Caco-2 (cell line): ENCODE measurements at regions of chr17 and their contacts with region 1.

Region 1: DNA sequence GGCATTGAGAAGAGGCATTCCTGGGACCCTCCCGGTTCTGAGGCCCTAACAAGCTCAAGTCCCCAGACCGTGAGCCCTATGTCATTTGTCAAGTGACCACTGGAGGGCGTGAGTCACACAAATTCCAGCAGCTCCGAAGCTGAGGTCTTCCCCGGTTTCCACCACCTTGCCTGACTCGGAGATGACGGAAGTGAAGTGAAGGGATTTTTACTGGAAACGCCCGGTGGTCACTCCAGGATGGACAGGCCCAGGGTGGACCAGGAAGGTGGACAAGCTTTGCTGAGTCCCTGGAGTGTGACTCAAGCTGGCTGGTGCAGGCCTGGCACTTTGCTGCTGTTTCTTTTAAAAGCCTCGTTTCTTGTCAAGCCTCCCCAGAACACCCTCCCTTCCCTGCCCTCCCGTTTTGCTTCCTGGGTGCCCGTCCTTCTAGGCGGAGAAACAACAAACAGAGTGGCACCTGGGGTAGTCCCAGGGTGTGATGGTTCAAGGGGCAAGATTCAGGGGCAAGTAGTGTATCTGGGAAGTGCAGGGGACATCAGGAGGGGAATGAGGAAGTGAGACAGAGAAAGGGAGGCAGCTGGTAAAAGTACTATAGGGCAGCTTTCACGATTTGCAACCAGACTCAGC is 5.3 kb upstream of the NOS2 start:
- DNase-seq: peak; percentile 97
- H3K4me3 ChIP-seq: peak overlapping the region; percentile 19
- H3K4me3 Mint-ChIP-seq: peak overlapping the region; percentile 65
- H3K27ac Mint-ChIP-seq: peak overlapping the region; percentile 95
- H3K4me1 ChIP-seq: peaks cover 52% of the 10 kb centered on the region
- H3K4me1 Mint-ChIP-seq: peaks cover 41% of the 10 kb centered on the region
- H3K27me3 ChIP-seq: no peaks in the 10 kb centered on the region
- H3K27me3 Mint-ChIP-seq: no peaks in the 10 kb centered on the region
- CTCF ChIP-seq: peak; percentile 99

Region 2: GRCh38 chr17:27345141-27345904 is 460.3 kb before region 1 on chr17:
- CTCF ChIA-PET with region 1: no interaction called
- POLR2A ChIA-PET with region 1: no interaction called
- intact Hi-C with region 1: no loop called
- DNase-seq: no peak
- H3K4me3 ChIP-seq: no peak overlapping the region
- H3K4me3 Mint-ChIP-seq: no peak overlapping the region
- H3K27ac Mint-ChIP-seq: no peak overlapping the region
- H3K4me1 ChIP-seq: peaks cover 7% of the 10 kb centered on the region; the same call in 1 of the 2 replicates
- H3K4me1 Mint-ChIP-seq: no peaks in the 10 kb centered on the region
- H3K27me3 ChIP-seq: no peaks in the 10 kb centered on the region
- H3K27me3 Mint-ChIP-seq: no peaks in the 10 kb centered on the region
- CTCF ChIP-seq: no peak

Region 3: DNA sequence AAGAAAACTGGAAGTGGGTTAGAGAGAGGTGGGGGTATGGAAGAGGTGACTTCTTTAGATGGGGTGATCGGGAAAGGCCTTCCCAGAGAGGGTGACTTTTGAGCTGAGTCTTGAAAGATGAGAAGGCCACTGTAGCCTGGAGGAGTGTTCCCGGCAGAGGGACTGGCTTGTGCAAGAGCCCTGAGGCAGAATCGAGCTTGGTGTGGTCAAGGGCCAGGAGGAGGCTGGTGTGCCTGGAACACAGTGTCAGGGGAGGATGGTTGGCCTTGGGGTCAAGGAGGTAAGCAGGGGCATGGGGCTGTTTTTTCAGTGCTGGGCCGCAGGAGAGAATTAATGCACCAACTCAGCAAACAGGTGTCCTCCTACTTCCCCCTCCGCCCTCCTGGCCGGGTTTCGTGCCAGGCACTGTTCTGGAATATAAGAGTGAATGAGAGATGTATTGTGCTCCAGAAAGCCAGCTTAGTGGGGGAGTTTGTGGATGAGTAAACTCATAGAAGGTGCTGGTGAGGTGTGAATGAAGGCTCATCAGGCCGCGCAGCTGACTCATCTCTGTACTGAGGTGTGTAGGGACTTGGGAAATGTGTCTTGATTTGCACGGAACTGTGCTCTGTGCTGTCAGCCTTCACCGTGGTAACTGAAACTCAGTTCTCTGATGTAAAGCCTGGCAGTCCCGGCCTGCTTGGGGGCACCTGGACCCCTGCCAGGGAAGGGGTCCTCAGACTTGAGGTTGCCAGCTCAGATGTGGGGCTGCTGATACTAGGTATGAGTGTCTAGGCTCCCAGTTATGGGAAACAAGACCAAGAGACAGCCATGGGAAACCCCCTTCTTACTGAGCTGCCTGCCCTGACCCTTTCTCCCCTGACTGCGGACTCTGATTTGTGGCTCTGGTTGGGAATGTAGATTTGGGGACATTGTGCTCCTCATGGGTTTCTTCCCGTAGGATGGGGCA is 334.0 kb before region 1 on chr17:
- CTCF ChIA-PET with region 1: no interaction called
- POLR2A ChIA-PET with region 1: no interaction called
- intact Hi-C with region 1: no loop called
- DNase-seq: peak in 1 of 2 experiments; percentile 61
- H3K4me3 ChIP-seq: no peak overlapping the region
- H3K4me3 Mint-ChIP-seq: no peak overlapping the region
- H3K27ac Mint-ChIP-seq: no peak overlapping the region
- H3K4me1 ChIP-seq: no peaks in the 10 kb centered on the region
- H3K4me1 Mint-ChIP-seq: peaks cover 7% of the 10 kb centered on the region
- H3K27me3 ChIP-seq: no peaks in the 10 kb centered on the region
- H3K27me3 Mint-ChIP-seq: no peaks in the 10 kb centered on the region
- CTCF ChIP-seq: no peak

Region 4: GRCh38 chr17:27654654-27655524 is 150.7 kb before region 1 on chr17:
- CTCF ChIA-PET with region 1: interaction called, 14 read pairs
- POLR2A ChIA-PET with region 1: no interaction called
- intact Hi-C with region 1: no loop called
- DNase-seq: peak; percentile 97 to 98
- H3K4me3 ChIP-seq: no peak overlapping the region
- H3K4me3 Mint-ChIP-seq: no peak overlapping the region
- H3K27ac Mint-ChIP-seq: no peak overlapping the region
- H3K4me1 ChIP-seq: no peaks in the 10 kb centered on the region
- H3K4me1 Mint-ChIP-seq: peaks cover 8% of the 10 kb centered on the region
- H3K27me3 ChIP-seq: no peaks in the 10 kb centered on the region
- H3K27me3 Mint-ChIP-seq: peaks cover 3% of the 10 kb centered on the region
- CTCF ChIP-seq: peak; percentile 99 to 100

Region 5: DNA sequence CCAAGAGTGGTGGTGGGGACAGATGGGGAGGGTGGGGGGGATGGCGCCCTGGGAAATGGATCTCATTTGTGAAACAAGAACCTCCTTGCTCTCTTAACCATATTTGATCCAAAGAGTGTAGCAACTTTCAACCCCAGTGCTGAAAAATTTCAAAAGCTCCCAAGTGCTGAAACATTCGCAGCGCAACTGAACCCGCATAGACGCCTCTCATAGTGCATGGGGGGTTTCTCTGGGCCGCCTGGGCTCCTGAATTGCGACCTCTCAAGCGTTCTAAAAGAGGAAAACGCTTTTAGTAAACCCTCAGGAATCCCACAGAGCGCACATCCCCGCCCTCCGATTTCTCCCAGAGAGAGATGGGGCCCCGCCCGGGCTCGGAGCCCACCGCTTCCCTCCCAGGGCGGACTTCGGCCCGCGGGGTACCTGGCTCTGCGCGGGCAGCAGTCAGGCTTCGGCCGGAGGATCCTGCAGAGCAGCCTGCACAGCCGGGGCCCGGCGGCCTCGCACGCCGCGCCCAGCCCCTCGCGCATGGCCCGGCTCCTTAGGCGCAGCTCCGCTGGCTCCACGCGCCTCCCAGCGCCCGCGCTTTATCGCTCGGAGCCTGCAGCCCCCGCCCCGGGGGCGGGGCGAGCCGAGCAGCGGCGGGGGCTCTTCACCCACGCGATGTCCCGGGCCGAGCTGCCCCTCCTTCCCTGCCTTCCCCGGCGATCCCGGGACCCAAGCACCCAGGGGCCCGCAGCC is 12.3 kb before region 1 on chr17:
- CTCF ChIA-PET with region 1: interaction called, 67 read pairs
- POLR2A ChIA-PET with region 1: interaction called, 7 read pairs
- intact Hi-C with region 1: no loop called
- DNase-seq: peak; percentile 83 to 90
- H3K4me3 ChIP-seq: peak overlapping the region; percentile 56
- H3K4me3 Mint-ChIP-seq: peak overlapping the region; percentile 80
- H3K27ac Mint-ChIP-seq: peak overlapping the region; percentile 53
- H3K4me1 ChIP-seq: peaks cover 42% of the 10 kb centered on the region
- H3K4me1 Mint-ChIP-seq: peaks cover 44% of the 10 kb centered on the region
- H3K27me3 ChIP-seq: no peaks in the 10 kb centered on the region
- H3K27me3 Mint-ChIP-seq: no peaks in the 10 kb centered on the region
- CTCF ChIP-seq: no peak

Region 6: DNA sequence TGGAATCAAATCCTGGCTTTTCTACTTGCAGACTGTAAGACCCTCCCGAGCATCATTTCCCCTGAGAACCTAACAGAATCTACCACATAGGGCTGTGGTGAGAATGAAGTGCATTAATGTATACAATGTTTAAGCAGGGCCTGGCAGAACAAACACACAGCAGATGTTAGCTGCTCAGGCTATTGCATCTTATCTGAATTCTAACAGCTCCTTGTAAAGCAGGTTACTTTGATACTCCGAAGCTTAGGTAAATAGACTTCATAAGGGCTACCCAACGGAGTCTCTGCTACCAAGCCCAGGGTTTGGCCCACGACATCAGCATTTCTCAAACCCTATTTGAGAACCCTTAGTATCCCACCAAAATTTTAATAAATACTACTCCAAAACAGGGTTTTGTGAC is 19.1 kb after region 1 on chr17:
- CTCF ChIA-PET with region 1: interaction called, 32 read pairs
- POLR2A ChIA-PET with region 1: no interaction called
- intact Hi-C with region 1: loop called (anchors 2 kb)
- DNase-seq: peak; percentile 66 to 70
- H3K4me3 ChIP-seq: no peak overlapping the region
- H3K4me3 Mint-ChIP-seq: no peak overlapping the region
- H3K27ac Mint-ChIP-seq: no peak overlapping the region
- H3K4me1 ChIP-seq: peaks cover 16% of the 10 kb centered on the region
- H3K4me1 Mint-ChIP-seq: peaks cover 25% of the 10 kb centered on the region
- H3K27me3 ChIP-seq: no peaks in the 10 kb centered on the region
- H3K27me3 Mint-ChIP-seq: no peaks in the 10 kb centered on the region
- CTCF ChIP-seq: no peak

Region 7: DNA sequence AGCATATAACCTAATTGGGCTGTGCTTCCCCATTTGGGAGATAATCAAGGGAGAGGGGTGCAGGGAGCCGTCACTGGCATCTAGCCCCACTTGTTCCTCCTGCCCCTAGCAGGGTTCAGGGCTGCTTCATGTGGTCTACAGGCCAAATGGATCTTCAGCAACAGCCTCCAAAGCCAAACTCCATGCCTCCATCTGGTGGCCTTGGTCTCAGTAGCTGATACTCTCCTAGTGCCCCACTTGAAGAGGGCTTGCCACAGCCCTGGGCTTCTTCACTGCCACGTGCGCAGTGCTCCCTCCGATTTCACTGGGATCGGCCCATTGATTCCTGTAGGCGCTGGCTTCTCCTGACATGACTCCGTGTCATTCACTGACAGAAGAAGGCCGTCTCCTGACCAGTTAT is 62.9 kb after region 1 on chr17:
- CTCF ChIA-PET with region 1: interaction called, 44 read pairs
- POLR2A ChIA-PET with region 1: no interaction called
- intact Hi-C with region 1: loop called (anchors 1 kb)
- DNase-seq: peak; percentile 57 to 66
- H3K4me3 ChIP-seq: no peak overlapping the region
- H3K4me3 Mint-ChIP-seq: no peak overlapping the region
- H3K27ac Mint-ChIP-seq: no peak overlapping the region
- H3K4me1 ChIP-seq: peaks cover 5% of the 10 kb centered on the region; the same call in 1 of the 2 replicates
- H3K4me1 Mint-ChIP-seq: peaks cover 7% of the 10 kb centered on the region
- H3K27me3 ChIP-seq: no peaks in the 10 kb centered on the region
- H3K27me3 Mint-ChIP-seq: no peaks in the 10 kb centered on the region
- CTCF ChIP-seq: peak; percentile 26 to 66

Region 8: GRCh38 chr17:27892866-27893769 is 87.5 kb after region 1 on chr17 and contains the start of gene LYRM9:
- CTCF ChIA-PET with region 1: interaction called, 540 read pairs
- POLR2A ChIA-PET with region 1: interaction called, 5 read pairs
- intact Hi-C with region 1: no loop called
- DNase-seq: peak; percentile 98 to 100
- H3K4me3 ChIP-seq: peak within 1 kb of the TSS; percentile 75
- H3K4me3 Mint-ChIP-seq: peak within 1 kb of the TSS; percentile 70
- H3K27ac Mint-ChIP-seq: peak within 1 kb of the TSS; percentile 28
- H3K4me1 ChIP-seq: peaks cover 39% of the 10 kb centered on the region
- H3K4me1 Mint-ChIP-seq: peaks cover 47% of the 10 kb centered on the region
- H3K27me3 ChIP-seq: no peaks in the 10 kb centered on the region
- H3K27me3 Mint-ChIP-seq: no peaks in the 10 kb centered on the region
- CTCF ChIP-seq: peak; percentile 98 to 99
- total RNA-seq, gene LYRM9: 25.6 and 29.1 TPM in 2 replicates

Region 9: GRCh38 chr17:28261184-28261583 is 455.6 kb after region 1 on chr17:
- CTCF ChIA-PET with region 1: no interaction called
- POLR2A ChIA-PET with region 1: no interaction called
- intact Hi-C with region 1: no loop called
- DNase-seq: no peak
- H3K4me3 ChIP-seq: no peak overlapping the region
- H3K4me3 Mint-ChIP-seq: no peak overlapping the region
- H3K27ac Mint-ChIP-seq: no peak overlapping the region
- H3K4me1 ChIP-seq: peaks cover 5% of the 10 kb centered on the region
- H3K4me1 Mint-ChIP-seq: no peaks in the 10 kb centered on the region
- H3K27me3 ChIP-seq: no peaks in the 10 kb centered on the region
- H3K27me3 Mint-ChIP-seq: no peaks in the 10 kb centered on the region
- CTCF ChIP-seq: no peak